ENCODE measurements at regions of chr7 and their contacts with region 1.

Region 1: DNA sequence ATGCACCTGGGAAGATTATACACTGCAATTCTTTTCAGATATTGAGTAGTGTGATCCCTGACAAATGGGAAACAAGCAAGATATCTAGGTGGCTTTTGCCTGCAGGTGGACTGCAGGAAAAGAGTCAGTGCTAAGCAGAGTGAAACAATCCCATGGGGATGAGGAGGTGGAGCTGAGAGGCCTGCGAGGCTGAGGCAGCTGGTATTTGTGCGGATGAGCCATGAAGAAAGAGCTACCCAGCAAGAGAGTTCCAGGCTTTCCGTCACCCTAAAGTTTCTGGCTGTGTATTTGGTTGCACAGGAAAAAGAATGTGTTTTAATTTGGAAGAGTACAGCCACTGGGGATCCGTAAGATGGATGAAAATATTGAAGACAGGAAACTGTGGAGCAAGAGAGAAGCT is 714.1 kb upstream of the COBL start:
- DNase-seq: no peak
- H3K4me3 Mint-ChIP-seq: no peak overlapping the region
- H3K27ac Mint-ChIP-seq: no peak overlapping the region
- H3K4me1 Mint-ChIP-seq: no peaks in the 10 kb centered on the region
- H3K27me3 Mint-ChIP-seq: no peaks in the 10 kb centered on the region

Region 2: GRCh38 chr7:51982653-51983052 is 48.1 kb before region 1 on chr7:
- CTCF ChIA-PET with region 1: no interaction called
- intact Hi-C with region 1: loop called (anchors 1 kb)
- DNase-seq: no peak
- H3K4me3 Mint-ChIP-seq: no peak overlapping the region
- H3K27ac Mint-ChIP-seq: no peak overlapping the region
- H3K4me1 Mint-ChIP-seq: no peaks in the 10 kb centered on the region
- H3K27me3 Mint-ChIP-seq: no peaks in the 10 kb centered on the region

Region 3: DNA sequence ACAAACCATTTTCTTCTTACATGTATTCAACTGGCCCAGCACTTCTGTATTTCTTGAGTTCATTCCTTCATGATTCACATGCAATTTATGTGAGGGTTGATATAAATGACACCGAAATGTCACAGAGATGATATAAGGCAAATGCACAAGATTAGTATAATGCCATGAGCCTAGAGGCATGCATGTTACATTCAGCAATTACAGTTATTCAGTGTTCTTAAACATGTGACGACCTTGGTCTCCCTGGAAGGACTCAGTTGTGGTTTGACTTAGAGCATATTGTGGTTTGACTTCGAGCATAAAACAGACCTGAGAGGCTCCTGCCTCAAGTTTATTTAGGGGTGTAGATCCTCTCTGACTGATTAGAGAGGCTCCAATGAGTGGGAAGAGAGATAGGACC is 252.6 kb after region 1 on chr7:
- CTCF ChIA-PET with region 1: no interaction called
- intact Hi-C with region 1: no loop called
- DNase-seq: no peak
- H3K4me3 Mint-ChIP-seq: no peak overlapping the region
- H3K27ac Mint-ChIP-seq: no peak overlapping the region
- H3K4me1 Mint-ChIP-seq: no peaks in the 10 kb centered on the region
- H3K27me3 Mint-ChIP-seq: no peaks in the 10 kb centered on the region